Panc1 (cell line): ENCODE measurements at regions of chr3 and their contacts with region 1.

Region 1: DNA sequence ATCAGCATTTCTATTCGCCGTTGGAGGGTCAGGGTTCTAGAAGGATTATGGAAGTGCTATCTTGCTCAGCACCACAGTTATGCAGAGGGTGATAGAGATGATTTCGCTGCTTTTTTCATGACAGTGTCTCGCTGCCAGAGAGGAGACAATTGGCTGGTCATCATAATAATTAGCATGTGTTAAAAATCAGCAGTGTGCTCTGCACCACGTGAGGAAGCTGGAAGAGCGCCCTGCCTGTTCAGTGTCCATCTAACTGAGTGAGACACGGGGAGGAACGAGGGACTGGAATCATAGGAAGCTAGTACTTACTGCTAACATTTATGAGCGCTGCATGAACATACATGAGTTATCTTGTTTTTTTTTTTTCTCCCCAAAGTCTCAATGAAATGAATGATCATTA is 116.2 kb upstream of the PLAAT1 start:
- DNase-seq: no peak
- ATAC-seq: no peak
- H3K4me3 ChIP-seq: no peak overlapping the region
- H3K27ac ChIP-seq: no peak overlapping the region
- H3K4me1 ChIP-seq: no peaks in the 10 kb centered on the region
- H3K27me3 ChIP-seq: 0 out of 2 replicates have a peak, but pooled peaks cover 5% of the 10 kb centered on the region
- CTCF ChIP-seq: no peak

Region 2: GRCh38 chr3:192409357-192409824 is 715.5 kb before region 1 on chr3:
- CTCF ChIA-PET with region 1: no interaction called
- POLR2A ChIA-PET with region 1: no interaction called
- in situ Hi-C with region 1: no loop called
- intact Hi-C with region 1: no loop called
- DNase-seq: no peak
- ATAC-seq: peak; percentile 80
- H3K4me3 ChIP-seq: peak overlapping the region in 1 of 2 experiments; percentile 33; a peak in 2 of 4 replicates
- H3K27ac ChIP-seq: no peak overlapping the region
- H3K4me1 ChIP-seq: no peaks in the 10 kb centered on the region
- H3K27me3 ChIP-seq: no peaks in the 10 kb centered on the region
- CTCF ChIP-seq: no peak

Region 3: GRCh38 chr3:193145248-193145647 is 20.4 kb after region 1 on chr3:
- CTCF ChIA-PET with region 1: no interaction called
- POLR2A ChIA-PET with region 1: no interaction called
- in situ Hi-C with region 1: no loop called
- intact Hi-C with region 1: loop called (anchors 1 kb)
- DNase-seq: no peak
- ATAC-seq: no peak
- H3K4me3 ChIP-seq: no peak overlapping the region
- H3K27ac ChIP-seq: no peak overlapping the region
- H3K4me1 ChIP-seq: no peaks in the 10 kb centered on the region
- H3K27me3 ChIP-seq: no peaks in the 10 kb centered on the region
- CTCF ChIP-seq: no peak